PC-9 (cell line): ENCODE measurements at regions of chr3 and their contacts with region 1.

Region 1: DNA sequence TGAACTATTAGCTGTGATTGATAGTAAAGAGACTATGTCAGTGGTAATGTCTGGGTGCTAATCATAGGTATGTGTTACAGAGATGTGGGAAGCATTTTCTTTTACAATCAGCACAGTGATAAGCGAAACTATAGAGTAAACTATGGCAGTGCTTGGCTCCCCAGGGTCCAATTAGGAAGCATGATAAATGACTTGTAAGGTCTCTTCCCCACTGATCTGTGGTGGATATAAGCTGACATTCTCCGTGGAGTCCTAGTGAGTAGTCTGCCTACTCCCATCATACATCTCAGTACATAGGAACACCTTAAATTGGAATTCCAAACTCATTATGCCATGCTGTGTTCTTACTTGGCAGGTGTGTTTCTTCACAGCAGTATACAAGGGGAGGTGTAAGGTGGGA is 204.2 kb downstream of the GAP43 start:
- DNase-seq: no peak
- H3K4me3 ChIP-seq: no peak overlapping the region
- H3K27ac ChIP-seq: no peak overlapping the region
- H3K4me1 ChIP-seq: no peaks in the 10 kb centered on the region
- H3K27me3 ChIP-seq: no peaks in the 10 kb centered on the region
- CTCF ChIP-seq: no peak

Region 2: DNA sequence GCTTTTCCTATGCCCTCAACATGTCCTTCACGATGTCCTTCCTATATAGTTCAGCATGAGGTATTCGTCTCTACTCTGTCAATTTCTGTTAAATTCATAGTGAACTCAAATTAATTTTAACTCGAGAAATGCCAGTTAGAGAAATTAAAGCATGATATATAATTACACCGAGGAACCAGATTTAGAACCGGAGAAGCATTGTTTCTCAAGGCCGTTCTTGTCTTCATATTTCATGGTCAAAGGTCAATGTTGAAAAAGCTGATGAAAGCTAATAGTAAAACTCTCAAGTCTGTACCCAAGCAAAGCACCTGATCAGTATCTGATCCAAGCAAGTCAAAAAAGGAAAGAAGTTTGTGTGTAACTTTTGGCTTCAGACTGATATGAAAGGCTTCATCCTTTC is 844.2 kb before region 1 on chr3:
- CTCF ChIA-PET with region 1: no interaction called
- POLR2A ChIA-PET with region 1: interaction called, 10 read pairs
- intact Hi-C with region 1: no loop called
- DNase-seq: no peak
- H3K4me3 ChIP-seq: no peak overlapping the region
- H3K27ac ChIP-seq: no peak overlapping the region
- H3K4me1 ChIP-seq: no peaks in the 10 kb centered on the region
- H3K27me3 ChIP-seq: no peaks in the 10 kb centered on the region
- CTCF ChIP-seq: no peak